MCF 10A (cell line): ENCODE measurements at regions of chr15 and their contacts with region 1.

Region 1: DNA sequence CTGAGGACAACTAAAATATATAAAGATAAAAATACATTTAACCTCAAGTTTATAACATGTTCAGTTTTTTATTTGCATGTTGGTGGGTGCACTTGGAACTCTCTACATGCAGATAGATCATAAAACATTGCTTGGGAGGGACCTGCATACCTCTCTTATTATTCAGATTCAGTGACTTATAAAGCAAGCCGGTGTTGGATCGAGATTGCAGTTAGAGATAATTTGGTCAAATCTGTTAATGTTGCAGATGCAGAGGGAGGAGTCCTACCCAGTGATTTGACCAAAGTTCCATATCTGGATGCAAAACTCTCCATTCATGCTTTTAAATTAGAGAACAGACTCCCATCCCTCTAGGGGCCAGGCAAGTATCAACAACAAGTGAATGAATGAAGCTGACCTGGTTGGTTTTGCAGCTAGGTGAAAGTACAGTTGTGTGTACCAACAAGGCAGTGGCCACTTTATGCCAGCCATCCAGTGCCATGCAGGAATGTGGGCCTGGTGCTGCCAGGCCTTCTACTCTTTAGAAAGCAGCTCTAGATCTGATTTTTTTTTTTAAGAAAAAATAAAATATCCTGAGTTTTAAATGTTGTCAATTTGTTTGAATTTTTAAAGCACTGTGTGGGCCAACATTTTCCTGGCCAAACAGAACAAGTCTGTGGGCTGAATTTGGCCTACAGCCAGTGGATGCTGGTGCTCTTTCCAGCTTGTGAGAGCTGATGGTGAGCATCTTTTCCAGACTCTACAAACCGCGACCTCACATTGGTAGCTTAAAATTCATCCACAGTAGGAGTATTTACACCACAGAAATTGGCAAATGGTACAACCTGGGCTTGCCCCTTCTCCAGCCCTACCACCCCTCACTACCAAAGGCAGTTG is 12.3 kb downstream of the CDIN1 start:
- DNase-seq: peak; percentile 7
- H3K4me3 Mint-ChIP-seq: no peak overlapping the region
- H3K27ac Mint-ChIP-seq: no peak overlapping the region
- H3K4me1 Mint-ChIP-seq: peaks cover 6% of the 10 kb centered on the region
- H3K27me3 Mint-ChIP-seq: no peaks in the 10 kb centered on the region
- CTCF ChIP-seq: no peak

Region 2: GRCh38 chr15:36263666-36264065 is 328.1 kb before region 1 on chr15:
- CTCF ChIA-PET with region 1: no interaction called
- POLR2A ChIA-PET with region 1: no interaction called
- intact Hi-C with region 1: no loop called
- DNase-seq: no peak
- H3K4me3 Mint-ChIP-seq: no peak overlapping the region
- H3K27ac Mint-ChIP-seq: no peak overlapping the region
- H3K4me1 Mint-ChIP-seq: no peaks in the 10 kb centered on the region
- H3K27me3 Mint-ChIP-seq: no peaks in the 10 kb centered on the region
- CTCF ChIP-seq: no peak

Region 3: GRCh38 chr15:36579792-36580431 is 11.9 kb before region 1 on chr15:
- CTCF ChIA-PET with region 1: no interaction called
- POLR2A ChIA-PET with region 1: interaction called, 12 read pairs
- intact Hi-C with region 1: no loop called
- DNase-seq: peak; percentile 3
- H3K4me3 Mint-ChIP-seq: peak overlapping the region; percentile 79
- H3K27ac Mint-ChIP-seq: peak overlapping the region; percentile 80
- H3K4me1 Mint-ChIP-seq: peaks cover 12% of the 10 kb centered on the region
- H3K27me3 Mint-ChIP-seq: no peaks in the 10 kb centered on the region
- CTCF ChIP-seq: no peak

Region 4: DNA sequence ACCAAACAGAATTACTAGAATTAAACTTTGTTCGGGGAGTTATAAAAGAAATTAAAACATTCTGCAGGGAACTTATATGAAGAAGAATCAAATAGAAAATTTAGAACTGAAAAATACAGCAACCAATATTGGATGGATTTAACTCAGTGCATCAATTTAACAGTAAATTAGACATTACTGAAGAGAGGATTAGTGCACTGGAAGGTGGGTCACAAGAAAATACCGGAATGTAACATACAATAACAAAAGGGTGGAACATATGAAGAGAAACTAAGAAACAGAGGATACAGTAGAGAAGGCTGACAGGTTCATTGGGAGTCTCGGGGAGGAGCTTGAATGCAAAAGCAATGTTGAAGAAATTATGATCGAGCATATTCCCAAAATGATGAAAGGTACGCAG is 43.9 kb after region 1 on chr15:
- CTCF ChIA-PET with region 1: no interaction called
- POLR2A ChIA-PET with region 1: no interaction called
- intact Hi-C with region 1: loop called (anchors 2 kb)
- DNase-seq: no peak
- H3K4me3 Mint-ChIP-seq: no peak overlapping the region
- H3K27ac Mint-ChIP-seq: no peak overlapping the region
- H3K4me1 Mint-ChIP-seq: peaks cover 9% of the 10 kb centered on the region
- H3K27me3 Mint-ChIP-seq: no peaks in the 10 kb centered on the region
- CTCF ChIP-seq: no peak